IMR-90 (cell line): ENCODE measurements at regions of chr17 and their contacts with region 1.

Region 1: GRCh38 chr17:4293572-4293971 is 29.8 kb upstream of the ANKFY1 start:
- DNase-seq: no peak
- ATAC-seq: no peak
- H3K4me3 ChIP-seq: no peak overlapping the region
- H3K27ac ChIP-seq: no peak overlapping the region
- H3K4me1 ChIP-seq: peaks cover 5% of the 10 kb centered on the region; the same call in 1 of the 2 replicates
- H3K27me3 ChIP-seq: no peaks in the 10 kb centered on the region
- CTCF ChIP-seq: no peak
- POLR2A ChIP-seq: no peak
- RAD21 ChIP-seq: no peak

Region 2: GRCh38 chr17:4023220-4023619 is 270.4 kb before region 1 on chr17:
- CTCF ChIA-PET with region 1: no interaction called
- POLR2A ChIA-PET with region 1: no interaction called
- dilution Hi-C with region 1: no loop called
- in situ Hi-C with region 1: no loop called
- intact Hi-C with region 1: no loop called
- DNase-seq: no peak
- ATAC-seq: peak; percentile 21; the same call in 1 of the 2 replicates
- H3K4me3 ChIP-seq: no peak overlapping the region
- H3K27ac ChIP-seq: no peak overlapping the region
- H3K4me1 ChIP-seq: no peaks in the 10 kb centered on the region
- H3K27me3 ChIP-seq: no peaks in the 10 kb centered on the region
- CTCF ChIP-seq: no peak
- POLR2A ChIP-seq: no peak
- RAD21 ChIP-seq: no peak

Region 3: DNA sequence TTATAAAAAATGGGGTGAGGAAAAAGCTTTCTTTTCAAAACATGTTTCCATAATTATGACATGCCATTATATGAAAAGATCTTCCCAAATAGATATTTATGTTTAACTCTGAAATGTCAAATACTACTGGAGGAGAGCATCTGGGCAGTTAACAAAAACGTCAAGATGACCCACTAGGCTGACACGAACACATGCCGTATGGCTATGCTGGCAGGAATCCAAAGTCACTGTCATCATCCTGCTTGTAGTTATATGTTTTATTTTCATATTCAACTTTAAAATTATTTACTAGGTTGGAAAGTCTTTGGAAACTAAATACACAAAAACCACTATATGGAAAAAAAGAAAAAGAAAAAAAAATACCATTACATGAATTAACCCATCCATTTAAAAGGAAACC is 57.1 kb before region 1 on chr17:
- CTCF ChIA-PET with region 1: no interaction called
- POLR2A ChIA-PET with region 1: no interaction called
- dilution Hi-C with region 1: no loop called
- in situ Hi-C with region 1: no loop called
- intact Hi-C with region 1: loop called (anchors 5 kb)
- DNase-seq: peak; percentile 52
- ATAC-seq: no peak
- H3K4me3 ChIP-seq: no peak overlapping the region
- H3K27ac ChIP-seq: no peak overlapping the region
- H3K4me1 ChIP-seq: peaks cover 10% of the 10 kb centered on the region
- H3K27me3 ChIP-seq: no peaks in the 10 kb centered on the region
- CTCF ChIP-seq: no peak
- POLR2A ChIP-seq: no peak
- RAD21 ChIP-seq: no peak

Region 4: DNA sequence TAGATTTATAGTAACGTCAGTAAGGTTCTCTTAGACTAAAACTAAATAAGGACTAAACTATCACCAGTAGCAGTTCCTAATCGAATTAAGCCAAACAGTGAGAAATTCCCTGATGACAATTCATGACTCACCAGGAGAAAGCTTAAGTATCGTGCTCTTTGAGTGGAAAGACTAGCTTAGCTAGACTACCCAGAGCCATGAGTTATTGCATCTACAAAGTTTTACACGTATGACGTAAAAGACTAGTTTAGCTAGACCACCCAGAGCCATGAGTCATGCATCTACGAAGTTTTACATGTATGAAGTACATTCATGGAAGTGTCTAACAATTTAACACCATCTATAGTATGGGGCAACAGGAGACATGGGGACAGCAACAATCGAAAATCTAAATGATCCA is 36.3 kb after region 1 on chr17:
- CTCF ChIA-PET with region 1: no interaction called
- POLR2A ChIA-PET with region 1: no interaction called
- dilution Hi-C with region 1: no loop called
- in situ Hi-C with region 1: no loop called
- intact Hi-C with region 1: loop called (anchors 5 kb)
- DNase-seq: peak; percentile 99
- ATAC-seq: peak; percentile 77
- H3K4me3 ChIP-seq: no peak overlapping the region
- H3K27ac ChIP-seq: no peak overlapping the region
- H3K4me1 ChIP-seq: peaks cover 13% of the 10 kb centered on the region
- H3K27me3 ChIP-seq: no peaks in the 10 kb centered on the region
- CTCF ChIP-seq: no peak
- POLR2A ChIP-seq: no peak
- RAD21 ChIP-seq: no peak

Region 5: GRCh38 chr17:4334776-4335584 is 41.4 kb after region 1 on chr17:
- CTCF ChIA-PET with region 1: no interaction called
- POLR2A ChIA-PET with region 1: no interaction called
- dilution Hi-C with region 1: no loop called
- in situ Hi-C with region 1: no loop called
- intact Hi-C with region 1: loop called (anchors 5 kb)
- DNase-seq: no peak
- ATAC-seq: no peak
- H3K4me3 ChIP-seq: no peak overlapping the region
- H3K27ac ChIP-seq: no peak overlapping the region
- H3K4me1 ChIP-seq: peaks cover 5% of the 10 kb centered on the region; the same call in 1 of the 2 replicates
- H3K27me3 ChIP-seq: no peaks in the 10 kb centered on the region
- CTCF ChIP-seq: no peak
- POLR2A ChIP-seq: no peak
- RAD21 ChIP-seq: no peak